Right ventricle myocardium inferior (tissue), 1 donor: ENCODE measurements at regions of chr12 and their contacts with region 1.

Region 1: DNA sequence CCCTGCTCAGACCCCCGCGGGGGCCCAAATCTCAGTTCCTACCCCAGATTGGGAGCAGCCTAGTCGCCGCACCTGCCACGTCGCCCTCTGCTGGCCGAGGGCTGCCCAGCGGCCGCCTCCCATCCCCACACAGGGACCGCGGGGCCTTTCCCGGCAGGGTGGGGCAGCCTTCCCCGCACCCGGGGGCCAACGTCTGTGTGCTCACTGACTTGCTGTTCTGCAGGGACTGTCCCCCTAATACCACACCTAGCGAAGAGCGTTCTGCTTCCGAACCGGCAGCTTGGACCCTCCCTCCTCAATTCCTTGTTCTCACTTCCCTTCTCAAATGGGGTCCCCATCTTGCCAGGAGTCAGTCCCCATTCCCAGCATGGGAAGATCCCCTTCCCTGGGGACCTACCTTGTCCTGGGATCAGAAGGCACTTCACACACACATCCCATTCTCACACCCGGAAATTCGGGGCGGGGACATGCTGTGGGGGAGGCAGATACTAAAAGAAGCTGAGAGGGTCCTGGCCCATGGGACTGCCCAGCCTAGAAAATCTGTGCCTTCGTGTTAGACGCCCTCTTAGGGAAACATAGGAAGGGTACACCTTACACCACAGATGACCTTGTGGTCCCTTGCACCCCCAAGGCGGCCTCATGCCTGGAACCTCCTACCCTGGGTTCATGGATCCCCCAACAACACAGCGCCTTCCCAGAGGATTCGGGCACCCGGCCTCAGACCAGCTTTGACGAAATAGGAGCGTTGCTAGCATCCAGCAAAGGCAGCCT is 16.4 kb downstream of the ACVRL1 start:
- DNase-seq: peak; percentile 91
- ATAC-seq: peak; percentile 81

Region 2: DNA sequence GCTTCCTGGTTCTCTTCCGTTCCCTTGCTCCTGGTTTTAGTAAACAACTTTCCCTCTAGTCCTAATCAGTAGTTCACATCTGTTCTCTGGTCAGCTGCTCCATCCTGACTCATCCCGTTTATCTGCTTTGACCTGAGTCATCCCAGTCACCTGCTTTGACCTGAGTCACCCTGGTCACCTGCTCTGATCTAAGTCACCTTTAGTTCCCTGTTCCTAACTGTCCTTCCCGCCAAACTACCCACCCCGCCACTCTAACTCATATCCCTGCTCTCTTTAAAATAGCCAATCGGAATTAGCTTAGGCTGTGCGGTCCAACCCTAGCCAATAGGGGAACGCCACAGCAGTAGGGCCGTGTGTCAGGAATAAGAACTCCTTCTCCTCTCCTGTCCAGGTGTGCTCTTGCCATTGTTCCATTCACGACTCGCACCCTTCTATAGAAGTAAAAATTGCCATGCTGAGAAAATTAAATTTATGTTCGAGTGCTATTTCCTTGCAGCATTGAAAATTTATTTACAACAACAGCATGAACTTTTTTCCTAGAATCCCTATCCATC is 38.9 kb before region 1 on chr12:
- intact Hi-C with region 1: no loop called
- DNase-seq: no peak
- ATAC-seq: no peak

Region 3: DNA sequence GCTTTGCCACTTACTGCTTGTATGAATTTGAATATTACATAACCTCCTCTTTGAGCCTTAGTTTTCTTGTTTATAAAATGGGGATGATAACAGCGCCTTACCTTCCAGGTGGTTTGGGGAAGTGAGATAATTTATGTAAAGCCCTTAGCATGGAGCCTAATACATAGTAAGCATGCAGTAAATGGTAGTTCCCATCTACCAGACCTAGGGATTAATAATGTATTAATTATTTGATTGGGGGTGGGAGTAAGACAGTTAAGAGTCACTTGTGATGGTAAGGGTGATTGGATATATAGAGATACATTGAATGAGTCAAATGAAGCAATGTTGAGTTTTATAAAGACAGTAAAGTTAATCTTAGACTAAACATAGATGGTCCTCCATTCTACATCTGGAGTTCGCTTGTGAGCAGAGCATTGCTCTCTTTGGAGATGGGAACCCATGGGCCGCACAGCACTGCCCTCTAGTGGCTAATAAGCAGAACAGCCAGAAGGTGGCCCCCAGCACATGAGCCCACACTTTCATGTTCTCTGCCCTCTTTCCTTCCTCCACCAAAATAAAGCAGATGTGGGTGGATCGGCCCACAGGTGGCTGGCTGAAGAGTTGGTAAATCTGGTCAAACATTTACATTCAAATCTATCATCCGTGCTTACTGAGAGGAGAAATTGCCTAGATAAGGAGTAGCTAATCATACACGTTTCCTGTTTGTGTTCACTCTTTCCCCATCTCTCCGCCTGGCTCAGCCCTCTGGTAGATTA is 56.5 kb after region 1 on chr12:
- intact Hi-C with region 1: loop called (anchors 2 kb)
- DNase-seq: peak; percentile 91
- ATAC-seq: peak; percentile 88